HEK293 (cell line): ENCODE measurements at regions of chr9 and their contacts with region 1.

Region 1: DNA sequence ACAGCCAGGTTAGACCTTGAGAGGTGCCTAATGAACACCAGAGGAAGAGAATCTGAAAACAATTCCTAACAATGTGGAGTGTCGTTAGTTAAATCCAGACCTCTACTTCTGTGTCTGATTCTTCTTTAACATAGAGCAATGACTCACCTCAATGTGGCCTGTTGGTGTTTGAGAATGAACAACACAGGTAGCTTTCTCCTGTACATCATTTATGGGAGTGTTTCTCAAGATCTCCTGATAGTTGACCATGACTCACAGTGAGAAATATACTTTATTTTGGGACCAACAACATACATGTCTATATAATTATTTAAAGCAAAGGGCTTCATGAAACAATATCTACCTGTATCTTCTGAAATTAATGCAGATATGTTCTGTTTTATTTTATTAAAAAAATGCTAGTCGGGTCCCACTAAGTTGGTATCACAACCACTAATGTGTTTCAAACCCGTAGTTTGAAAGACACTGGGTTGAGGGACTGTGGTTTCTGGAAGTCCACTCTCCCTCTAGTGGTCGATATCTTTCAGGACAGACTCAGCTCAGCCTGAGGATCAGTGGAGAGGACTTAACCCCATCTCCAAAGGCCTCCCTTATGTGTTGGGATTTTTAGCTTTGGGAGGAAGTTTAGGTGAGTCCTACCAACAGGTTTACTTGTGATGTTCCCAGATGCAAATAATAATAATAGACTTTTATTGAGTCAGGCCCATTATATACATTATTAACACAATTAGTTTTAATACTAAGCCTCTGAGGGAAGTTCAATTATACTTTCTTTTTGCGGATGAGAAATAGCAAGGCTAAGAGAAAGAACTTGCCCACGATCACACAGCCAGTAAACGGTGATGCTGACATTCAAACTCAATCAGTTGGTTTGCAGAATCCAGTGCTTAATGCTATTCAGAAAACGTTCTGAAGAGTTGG is 70.0 kb upstream of the KLF9 start:
- H3K4me3 ChIP-seq: no peak overlapping the region
- H3K27ac ChIP-seq: no peak overlapping the region
- H3K4me1 ChIP-seq: no peaks in the 10 kb centered on the region
- CTCF ChIP-seq: no peak

Region 2: GRCh38 chr9:70418822-70419545 is 65.5 kb before region 1 on chr9:
- CTCF ChIA-PET with region 1: interaction called, 13 read pairs
- POLR2A ChIA-PET with region 1: interaction called, 20 read pairs
- H3K4me3 ChIP-seq: peak overlapping the region; percentile 60
- H3K27ac ChIP-seq: peak overlapping the region; percentile 100
- H3K4me1 ChIP-seq: peaks cover 8% of the 10 kb centered on the region
- CTCF ChIP-seq: no peak

Region 3: GRCh38 chr9:70427161-70427945 is 57.1 kb before region 1 on chr9:
- CTCF ChIA-PET with region 1: interaction called, 10 read pairs
- POLR2A ChIA-PET with region 1: no interaction called
- H3K4me3 ChIP-seq: no peak overlapping the region
- H3K27ac ChIP-seq: no peak overlapping the region
- H3K4me1 ChIP-seq: no peaks in the 10 kb centered on the region
- CTCF ChIP-seq: no peak

Region 4: DNA sequence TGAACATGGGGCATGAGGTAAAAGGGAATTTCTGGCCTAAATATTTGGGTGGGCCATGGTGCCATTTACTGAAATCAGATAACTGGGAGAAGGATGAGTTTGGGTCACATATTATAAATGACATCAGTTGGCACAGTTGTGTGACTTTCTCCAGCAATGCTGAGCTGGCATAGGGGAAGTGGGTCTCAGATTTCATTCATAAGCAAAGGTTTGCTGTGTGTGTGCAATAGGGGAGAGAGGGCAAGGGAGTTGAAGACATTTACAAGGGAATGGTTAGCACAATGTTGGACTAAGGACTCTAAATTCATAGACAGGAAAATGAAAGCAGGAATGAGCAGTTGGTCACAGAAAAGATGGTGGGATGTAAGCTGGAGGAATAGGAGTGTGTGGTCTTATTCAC is 22.2 kb before region 1 on chr9:
- CTCF ChIA-PET with region 1: interaction called, 11 read pairs
- POLR2A ChIA-PET with region 1: no interaction called
- H3K4me3 ChIP-seq: no peak overlapping the region
- H3K27ac ChIP-seq: no peak overlapping the region
- H3K4me1 ChIP-seq: no peaks in the 10 kb centered on the region
- CTCF ChIP-seq: no peak

Region 5: DNA sequence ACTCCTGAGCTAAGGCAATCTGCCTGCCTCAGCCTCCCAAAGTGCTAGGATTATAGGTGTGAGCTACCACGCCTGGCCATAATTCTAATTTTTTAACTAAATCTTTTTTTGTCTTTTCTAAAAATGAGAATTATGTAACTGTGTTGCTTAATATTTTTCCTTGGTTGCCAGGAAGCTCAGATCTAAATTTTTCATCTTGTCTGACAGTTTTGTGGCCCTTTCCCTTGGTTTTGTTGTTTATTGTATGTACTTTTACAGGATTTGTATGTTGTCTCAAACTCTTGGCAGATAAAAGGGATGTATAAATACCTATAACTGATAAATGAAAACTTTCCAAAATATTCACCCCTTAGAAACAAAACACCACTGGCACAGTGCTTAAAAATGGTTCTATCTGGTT is 18.2 kb after region 1 on chr9:
- CTCF ChIA-PET with region 1: interaction called, 10 read pairs
- POLR2A ChIA-PET with region 1: interaction called, 3 read pairs
- H3K4me3 ChIP-seq: no peak overlapping the region
- H3K27ac ChIP-seq: no peak overlapping the region
- H3K4me1 ChIP-seq: no peaks in the 10 kb centered on the region
- CTCF ChIP-seq: no peak

Region 6: DNA sequence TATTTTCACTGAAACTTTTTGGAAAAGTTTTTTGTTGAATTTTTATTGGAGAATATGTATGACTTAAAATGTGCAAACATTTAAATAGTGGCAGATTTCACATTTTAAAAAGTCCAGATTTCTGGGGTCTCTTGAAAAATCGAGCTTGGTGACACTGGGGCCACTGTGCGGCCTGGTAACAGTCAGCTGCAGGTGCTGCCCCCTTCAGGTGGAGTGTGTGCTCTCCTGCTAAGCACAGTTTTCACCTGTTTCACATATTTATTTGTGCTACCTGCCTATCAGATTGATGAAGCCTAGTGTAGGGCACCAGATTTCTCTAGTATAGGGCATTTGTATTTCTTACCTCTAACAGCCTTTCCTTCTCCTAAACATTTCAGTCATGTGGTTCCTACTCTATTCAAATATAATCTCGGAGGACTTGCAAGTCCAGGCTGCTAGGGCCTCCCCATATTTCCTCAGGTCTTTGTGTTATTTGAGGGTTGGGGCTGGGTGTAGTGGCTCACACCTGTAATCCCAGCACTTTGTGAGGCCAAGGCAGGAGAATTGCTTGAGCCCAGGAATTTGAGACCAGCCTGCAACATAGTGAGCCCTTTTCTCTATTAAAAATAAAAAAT is 25.8 kb after region 1 on chr9:
- CTCF ChIA-PET with region 1: interaction called, 13 read pairs
- POLR2A ChIA-PET with region 1: no interaction called
- H3K4me3 ChIP-seq: no peak overlapping the region
- H3K27ac ChIP-seq: no peak overlapping the region
- H3K4me1 ChIP-seq: no peaks in the 10 kb centered on the region
- CTCF ChIP-seq: no peak

Region 7: GRCh38 chr9:70962664-70963435 is 478.4 kb after region 1 on chr9:
- CTCF ChIA-PET with region 1: no interaction called
- POLR2A ChIA-PET with region 1: no interaction called
- H3K4me3 ChIP-seq: no peak overlapping the region
- H3K27ac ChIP-seq: no peak overlapping the region
- H3K4me1 ChIP-seq: peaks cover 6% of the 10 kb centered on the region; the same call in 1 of the 2 replicates
- CTCF ChIP-seq: no peak